Naive thymus-derived CD4-positive, alpha-beta T cell (primary cell): ENCODE measurements at regions of chr11 and their contacts with region 1.

Region 1: GRCh38 chr11:86244522-86245368 is at the start of gene EED:
- DNase-seq: peak; percentile 88 to 94 (median 92)
- ATAC-seq: peak; percentile 94
- H3K4me3 ChIP-seq: peak within 1 kb of the TSS; percentile 100
- H3K4me3 Mint-ChIP-seq: no peak within 1 kb of the TSS
- H3K27ac ChIP-seq: peak within 1 kb of the TSS; percentile 97
- H3K27ac Mint-ChIP-seq: no peak within 1 kb of the TSS
- H3K4me1 ChIP-seq: peaks cover 32 to 33% of the 10 kb centered on the region in 2 donors
- H3K4me1 Mint-ChIP-seq: peaks cover 0 to 34% (median 1%) of the 10 kb centered on the region in 7 donors
- H3K27me3 ChIP-seq: no peaks in the 10 kb centered on the region
- H3K27me3 Mint-ChIP-seq: peaks cover 0 to 5% (median 0%) of the 10 kb centered on the region in 5 donors
- total RNA-seq, gene EED: 22.2 to 62.4 (median 35.5) TPM

Region 2: DNA sequence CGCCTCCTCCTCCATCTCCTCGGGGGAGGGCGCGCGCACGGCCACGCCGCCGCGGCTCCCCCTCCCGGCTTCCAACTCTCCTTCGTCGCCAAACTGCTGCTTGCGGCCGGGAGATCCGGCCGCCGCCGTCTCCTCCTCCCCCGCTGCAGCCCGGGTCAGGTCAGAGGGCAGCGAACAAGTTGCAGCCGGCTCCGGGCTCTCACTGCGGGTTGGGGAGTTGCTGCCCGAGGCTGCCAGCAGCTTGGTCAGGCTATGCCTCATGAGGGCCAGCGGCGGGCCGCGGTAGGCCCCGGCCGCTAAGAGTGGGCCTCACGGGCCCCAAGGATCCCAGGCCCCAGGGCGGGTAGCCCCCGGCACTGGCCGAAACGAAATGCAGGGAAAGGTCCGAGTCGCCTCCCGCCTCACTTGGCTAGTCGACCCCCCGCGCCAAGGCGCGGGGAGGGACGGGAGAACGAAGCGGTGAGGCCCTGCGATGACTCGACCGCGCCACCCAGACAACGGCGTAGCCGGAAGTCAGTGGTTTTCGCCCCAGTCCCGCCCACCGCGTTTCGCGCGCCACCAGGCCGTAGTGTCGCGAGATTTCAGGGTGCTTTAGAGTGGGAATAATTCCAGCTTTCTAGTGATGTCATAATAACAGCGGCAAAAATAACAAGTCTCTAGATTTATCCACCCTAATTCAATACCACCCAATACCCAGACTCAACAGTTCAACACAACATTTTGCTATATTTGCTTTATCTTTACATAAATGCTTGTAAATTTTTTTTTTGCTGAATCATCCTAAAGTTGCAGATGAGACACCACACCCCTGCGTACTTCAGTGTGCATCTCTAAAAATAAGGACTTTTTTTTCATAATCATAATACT is 579.9 kb before region 1 on chr11 and contains the start of gene CREBZF:
- CTCF ChIA-PET with region 1: no interaction called
- POLR2A ChIA-PET with region 1: interaction called, 4 read pairs
- intact Hi-C with region 1: loop called (anchors 1 kb)
- DNase-seq: peak; percentile 83 to 96 (median 92)
- ATAC-seq: peak; percentile 85
- H3K4me3 ChIP-seq: peak within 1 kb of the TSS; percentile 97
- H3K4me3 Mint-ChIP-seq: peak within 1 kb of the TSS; percentile 93 to 100 (median 99)
- H3K27ac ChIP-seq: peak within 1 kb of the TSS; percentile 99
- H3K27ac Mint-ChIP-seq: peak within 1 kb of the TSS; percentile 96 to 100 (median 99)
- H3K4me1 ChIP-seq: peaks cover 19 to 31% of the 10 kb centered on the region in 2 donors
- H3K4me1 Mint-ChIP-seq: peaks cover 29 to 55% (median 39%) of the 10 kb centered on the region in 7 donors
- H3K27me3 ChIP-seq: no peaks in the 10 kb centered on the region
- H3K27me3 Mint-ChIP-seq: peaks cover 0 to 5% (median 0%) of the 10 kb centered on the region in 5 donors
- total RNA-seq, gene CREBZF: 56.9 to 114 (median 59.7) TPM

Region 3: GRCh38 chr11:86193297-86194095 is 51.2 kb before region 1 on chr11:
- CTCF ChIA-PET with region 1: interaction called, 7 read pairs
- POLR2A ChIA-PET with region 1: no interaction called
- intact Hi-C with region 1: loop called in 1 of 2 experiments (anchors 2 kb)
- DNase-seq: peak; percentile 9 to 70 (median 65)
- ATAC-seq: peak; percentile 99
- H3K4me3 ChIP-seq: peak overlapping the region; percentile 36
- H3K4me3 Mint-ChIP-seq: peak overlapping the region; percentile 71 to 94 (median 88)
- H3K27ac ChIP-seq: no peak overlapping the region
- H3K27ac Mint-ChIP-seq: peak overlapping the region; percentile 21 to 91 (median 67)
- H3K4me1 ChIP-seq: peaks cover 5 to 7% of the 10 kb centered on the region in 2 donors
- H3K4me1 Mint-ChIP-seq: peaks cover 13 to 24% (median 15%) of the 10 kb centered on the region in 7 donors
- H3K27me3 ChIP-seq: no peaks in the 10 kb centered on the region
- H3K27me3 Mint-ChIP-seq: peaks cover 0 to 10% (median 3%) of the 10 kb centered on the region in 5 donors

Region 4: GRCh38 chr11:86255896-86256295 is 11.2 kb after region 1 on chr11:
- CTCF ChIA-PET with region 1: no interaction called
- POLR2A ChIA-PET with region 1: interaction called, 3 read pairs
- intact Hi-C with region 1: loop called in 1 of 2 experiments (anchors 1 kb)
- DNase-seq: no peak
- ATAC-seq: no peak
- H3K4me3 ChIP-seq: no peak overlapping the region
- H3K4me3 Mint-ChIP-seq: no peak overlapping the region
- H3K27ac ChIP-seq: no peak overlapping the region
- H3K27ac Mint-ChIP-seq: peak overlapping the region in 1 of 9 donors; percentile 21
- H3K4me1 ChIP-seq: peaks cover 0 to 4% of the 10 kb centered on the region in 2 donors
- H3K4me1 Mint-ChIP-seq: peaks cover 0 to 30% (median 24%) of the 10 kb centered on the region in 7 donors
- H3K27me3 ChIP-seq: no peaks in the 10 kb centered on the region
- H3K27me3 Mint-ChIP-seq: no peaks in the 10 kb centered on the region

Region 5: GRCh38 chr11:86302100-86302793 is 57.5 kb after region 1 on chr11 and contains the start of gene HIKESHI:
- CTCF ChIA-PET with region 1: no interaction called
- POLR2A ChIA-PET with region 1: interaction called, 11 read pairs
- intact Hi-C with region 1: loop called (anchors 1 kb)
- DNase-seq: peak; percentile 70 to 92 (median 81)
- ATAC-seq: peak; percentile 100
- H3K4me3 ChIP-seq: peak within 1 kb of the TSS; percentile 96
- H3K4me3 Mint-ChIP-seq: peak within 1 kb of the TSS; percentile 95 to 100 (median 100)
- H3K27ac ChIP-seq: peak within 1 kb of the TSS; percentile 86
- H3K27ac Mint-ChIP-seq: peak within 1 kb of the TSS; percentile 92 to 100 (median 97)
- H3K4me1 ChIP-seq: peaks cover 10 to 13% of the 10 kb centered on the region in 2 donors
- H3K4me1 Mint-ChIP-seq: peaks cover 4 to 37% (median 32%) of the 10 kb centered on the region in 7 donors
- H3K27me3 ChIP-seq: no peaks in the 10 kb centered on the region
- H3K27me3 Mint-ChIP-seq: peaks cover 0 to 8% (median 0%) of the 10 kb centered on the region in 5 donors
- total RNA-seq, gene HIKESHI: 16.7 to 38.4 (median 29.5) TPM